Dendritic cell treated with granulocyte-macrophage colony-stimulating factor and Interleukin-4, amounts not matched to agents 40 ng/mL and 50 ng/mL, for 4 days (primary cell): ENCODE measurements at regions of chr20 and their contacts with region 1.

Region 1: DNA sequence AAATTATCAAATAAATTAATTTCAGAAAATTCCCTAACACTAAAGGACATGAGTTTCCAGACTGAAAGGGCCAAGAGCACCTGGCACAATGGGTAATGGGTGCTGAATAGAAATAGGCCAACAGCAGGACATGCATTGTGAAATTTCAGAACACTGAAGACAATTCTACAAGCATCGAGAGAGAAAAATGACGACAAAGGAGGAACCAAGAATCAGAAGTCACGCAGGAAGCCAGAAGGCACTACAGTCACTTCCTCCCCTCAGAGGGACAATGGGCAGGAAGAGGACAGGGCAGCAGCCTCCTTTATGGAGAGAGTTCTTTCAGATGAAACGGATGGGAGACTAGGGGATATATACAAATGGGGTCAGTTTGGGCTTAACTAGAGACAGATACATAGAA is 29.6 kb downstream of the PCNA start:
- H3K4me3 Mint-ChIP-seq: no peak overlapping the region
- H3K27ac Mint-ChIP-seq: peak overlapping the region; percentile 96
- H3K4me1 Mint-ChIP-seq: peaks cover 58% of the 10 kb centered on the region
- H3K27me3 Mint-ChIP-seq: no peaks in the 10 kb centered on the region

Region 2: DNA sequence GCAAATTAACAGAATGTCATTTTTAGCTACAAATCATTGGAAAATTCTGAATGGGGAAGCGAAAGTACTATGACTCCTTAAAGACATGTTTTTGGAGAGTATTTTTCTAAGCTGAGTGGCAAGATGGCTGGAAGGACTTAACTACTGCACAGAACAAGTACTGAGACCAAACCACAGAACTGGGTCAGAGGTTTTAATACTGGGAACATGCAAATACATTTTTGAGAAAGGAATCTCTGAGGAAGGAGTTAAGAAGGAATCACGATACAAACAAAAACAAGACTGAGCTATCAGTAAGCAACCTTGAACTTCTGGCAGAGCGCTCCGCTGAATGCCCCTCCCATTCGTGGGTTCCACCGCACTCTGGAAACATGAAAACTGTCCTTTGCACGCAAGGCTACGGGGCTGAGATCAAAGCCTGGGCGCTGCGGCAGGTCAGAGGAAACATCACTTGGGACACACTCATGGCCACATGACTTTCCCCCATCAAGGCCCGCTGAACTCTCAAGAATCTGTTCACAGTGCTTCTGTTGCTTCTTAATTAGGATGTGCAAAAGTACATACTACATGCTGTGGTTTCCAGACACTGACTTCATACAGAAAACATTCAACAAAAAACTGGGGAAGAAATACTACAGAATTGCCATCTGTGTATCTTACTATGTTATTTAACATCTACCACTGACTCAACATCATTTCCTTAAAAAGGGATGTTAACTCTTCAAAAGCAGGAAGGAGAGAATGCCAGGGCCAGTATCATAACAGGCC is 116.7 kb before region 1 on chr20:
- intact Hi-C with region 1: loop called (anchors 5 kb)
- H3K4me3 Mint-ChIP-seq: peak overlapping the region; percentile 67
- H3K27ac Mint-ChIP-seq: peak overlapping the region; percentile 87
- H3K4me1 Mint-ChIP-seq: peaks cover 29% of the 10 kb centered on the region
- H3K27me3 Mint-ChIP-seq: no peaks in the 10 kb centered on the region

Region 3: DNA sequence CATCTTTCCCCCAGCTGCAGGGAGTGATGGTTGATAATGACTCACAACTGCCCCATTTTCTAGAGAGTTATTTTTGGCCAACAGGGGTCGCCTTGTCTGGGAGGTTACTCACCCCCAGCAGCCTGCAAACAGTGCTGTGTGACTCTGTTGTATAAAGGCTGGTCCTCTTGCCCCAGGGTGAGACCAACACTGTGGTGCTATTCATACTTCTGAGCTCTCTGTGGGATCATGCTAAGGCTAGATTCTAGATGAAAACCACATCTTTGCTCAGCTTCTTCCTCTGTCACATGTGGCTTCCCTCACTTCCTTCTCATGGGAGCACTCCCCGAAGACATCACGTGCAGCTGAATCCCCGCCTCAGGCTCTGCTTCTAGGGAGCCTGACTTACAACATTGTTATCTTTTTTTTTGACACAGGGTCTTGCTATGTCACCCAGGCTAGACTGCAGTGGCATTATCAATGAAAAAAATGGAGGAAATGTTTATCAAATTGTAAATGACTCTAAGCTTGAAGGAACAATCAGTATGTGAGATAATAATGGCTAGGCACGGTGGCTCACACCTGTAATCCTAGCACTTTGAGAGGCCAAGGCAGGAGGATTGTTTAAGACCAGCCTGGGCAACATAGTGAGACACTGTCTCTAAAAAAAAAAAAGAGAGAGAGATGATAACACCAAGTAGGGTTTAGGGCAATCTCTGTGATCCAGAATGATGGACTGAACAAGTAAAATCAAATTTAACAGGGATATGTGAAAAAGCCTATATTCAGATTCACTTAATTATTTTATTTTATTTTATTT is 33.2 kb before region 1 on chr20:
- intact Hi-C with region 1: loop called (anchors 5 kb)
- H3K4me3 Mint-ChIP-seq: no peak overlapping the region
- H3K27ac Mint-ChIP-seq: peak overlapping the region; percentile 87
- H3K4me1 Mint-ChIP-seq: peaks cover 42% of the 10 kb centered on the region
- H3K27me3 Mint-ChIP-seq: peaks cover 1% of the 10 kb centered on the region